Caco-2 (cell line): ENCODE measurements at regions of chr6 and their contacts with region 1.

Region 1: DNA sequence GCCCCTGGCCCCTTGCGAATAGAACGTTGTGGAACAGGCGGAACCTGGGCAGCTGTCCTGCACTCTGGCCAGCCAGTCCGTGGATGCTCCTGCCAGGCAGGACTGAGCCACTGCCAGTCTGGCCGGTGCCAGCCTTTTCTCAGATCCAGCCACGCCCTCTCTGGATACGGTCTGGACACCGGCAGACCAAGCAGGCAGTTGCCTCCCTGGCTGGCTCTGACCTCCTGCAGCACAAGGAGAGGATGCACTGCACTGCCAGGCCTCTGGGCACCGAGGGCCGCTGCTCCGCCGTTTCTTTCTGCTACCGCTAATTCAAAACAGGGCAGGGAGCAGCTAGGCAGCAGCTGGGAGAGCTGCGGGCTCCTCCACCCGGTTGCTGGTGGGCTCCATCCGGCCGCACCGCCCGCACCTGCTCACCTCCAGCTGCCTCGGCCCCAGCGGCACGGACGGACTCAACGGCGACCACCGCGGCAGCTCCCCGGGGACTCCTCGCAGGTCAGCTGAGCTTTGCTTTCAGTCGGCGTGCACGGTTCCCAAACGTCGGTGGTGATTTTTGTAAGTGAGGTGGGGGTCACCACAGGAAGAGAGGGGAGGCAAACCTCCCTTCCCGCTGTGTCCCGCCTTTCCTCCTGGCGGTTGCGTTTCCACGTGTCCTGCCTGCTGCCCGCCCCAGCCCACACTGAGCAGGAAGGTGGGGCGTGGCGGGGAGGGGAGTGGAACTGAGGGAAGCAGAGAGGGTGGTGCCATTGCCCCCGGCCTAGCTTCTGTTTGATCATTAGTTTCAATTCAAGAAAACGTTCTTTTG is 30.3 kb upstream of the AFDN start:
- DNase-seq: peak; percentile 51 to 53
- H3K4me3 ChIP-seq: peak overlapping the region; percentile 51
- H3K4me3 Mint-ChIP-seq: peak overlapping the region; percentile 62
- H3K27ac Mint-ChIP-seq: peak overlapping the region; percentile 27
- H3K4me1 ChIP-seq: peaks cover 17% of the 10 kb centered on the region
- H3K4me1 Mint-ChIP-seq: peaks cover 22% of the 10 kb centered on the region
- H3K27me3 ChIP-seq: no peaks in the 10 kb centered on the region
- H3K27me3 Mint-ChIP-seq: no peaks in the 10 kb centered on the region
- CTCF ChIP-seq: no peak

Region 2: DNA sequence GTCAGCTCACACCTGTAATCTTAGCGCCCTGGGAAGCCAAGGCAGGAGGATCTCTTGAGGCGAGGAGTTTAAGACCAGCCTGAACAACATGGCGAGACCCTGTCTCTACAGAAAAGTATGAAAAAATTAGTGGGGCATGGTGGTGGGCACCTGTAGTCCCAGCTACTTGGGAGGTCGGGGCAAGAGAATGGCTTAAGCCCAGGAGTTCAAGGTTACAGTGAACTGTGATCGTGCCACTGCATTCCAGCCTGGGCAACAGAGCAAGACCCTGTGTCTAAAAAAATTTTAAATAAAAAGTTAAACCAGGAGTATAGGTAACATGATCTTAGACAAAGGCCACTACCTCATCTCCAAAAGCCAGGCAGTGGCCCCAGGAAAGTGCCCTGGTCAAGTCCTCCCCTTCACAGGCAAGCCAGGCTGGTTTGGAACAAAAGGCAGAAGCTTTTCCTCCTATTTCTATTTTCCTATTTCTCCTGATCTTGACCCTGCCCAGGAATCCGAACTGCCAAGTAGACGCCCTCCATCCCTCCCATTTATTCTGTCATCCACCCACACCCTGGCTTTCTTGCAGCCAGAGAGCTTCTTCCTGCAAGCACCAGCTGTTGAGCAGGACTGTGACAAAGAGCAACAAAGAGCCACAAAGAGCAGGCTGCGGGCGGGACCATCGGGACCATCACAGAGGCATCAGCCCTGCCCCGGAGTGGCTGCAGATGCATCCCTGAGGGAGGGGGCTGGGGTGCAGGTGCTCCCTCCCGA is 119.5 kb before region 1 on chr6:
- CTCF ChIA-PET with region 1: interaction called, 3 read pairs
- POLR2A ChIA-PET with region 1: no interaction called
- intact Hi-C with region 1: loop called (anchors 2 kb)
- DNase-seq: no peak
- H3K4me3 ChIP-seq: no peak overlapping the region
- H3K4me3 Mint-ChIP-seq: peak overlapping the region; percentile 87
- H3K27ac Mint-ChIP-seq: peak overlapping the region; percentile 86
- H3K4me1 ChIP-seq: peaks cover 65% of the 10 kb centered on the region
- H3K4me1 Mint-ChIP-seq: peaks cover 40% of the 10 kb centered on the region
- H3K27me3 ChIP-seq: no peaks in the 10 kb centered on the region
- H3K27me3 Mint-ChIP-seq: no peaks in the 10 kb centered on the region
- CTCF ChIP-seq: no peak

Region 3: GRCh38 chr6:167711768-167712730 is 84.3 kb before region 1 on chr6:
- CTCF ChIA-PET with region 1: no interaction called
- POLR2A ChIA-PET with region 1: no interaction called
- intact Hi-C with region 1: no loop called
- DNase-seq: no peak
- H3K4me3 ChIP-seq: no peak overlapping the region
- H3K4me3 Mint-ChIP-seq: no peak overlapping the region
- H3K27ac Mint-ChIP-seq: no peak overlapping the region
- H3K4me1 ChIP-seq: no peaks in the 10 kb centered on the region
- H3K4me1 Mint-ChIP-seq: no peaks in the 10 kb centered on the region
- H3K27me3 ChIP-seq: no peaks in the 10 kb centered on the region
- H3K27me3 Mint-ChIP-seq: no peaks in the 10 kb centered on the region
- CTCF ChIP-seq: no peak

Region 4: GRCh38 chr6:167898673-167899311 is 102.4 kb after region 1 on chr6:
- CTCF ChIA-PET with region 1: no interaction called
- POLR2A ChIA-PET with region 1: no interaction called
- intact Hi-C with region 1: no loop called
- DNase-seq: no peak
- H3K4me3 ChIP-seq: no peak overlapping the region
- H3K4me3 Mint-ChIP-seq: no peak overlapping the region
- H3K27ac Mint-ChIP-seq: no peak overlapping the region
- H3K4me1 ChIP-seq: no peaks in the 10 kb centered on the region
- H3K4me1 Mint-ChIP-seq: peaks cover 11% of the 10 kb centered on the region
- H3K27me3 ChIP-seq: no peaks in the 10 kb centered on the region
- H3K27me3 Mint-ChIP-seq: no peaks in the 10 kb centered on the region
- CTCF ChIP-seq: peak; percentile 53 to 60

Region 5: GRCh38 chr6:167910016-167910415 is 113.6 kb after region 1 on chr6:
- CTCF ChIA-PET with region 1: no interaction called
- POLR2A ChIA-PET with region 1: no interaction called
- intact Hi-C with region 1: no loop called
- DNase-seq: no peak
- H3K4me3 ChIP-seq: no peak overlapping the region
- H3K4me3 Mint-ChIP-seq: no peak overlapping the region
- H3K27ac Mint-ChIP-seq: no peak overlapping the region
- H3K4me1 ChIP-seq: peaks cover 13% of the 10 kb centered on the region; the same call in 1 of the 2 replicates
- H3K4me1 Mint-ChIP-seq: peaks cover 6% of the 10 kb centered on the region
- H3K27me3 ChIP-seq: no peaks in the 10 kb centered on the region
- H3K27me3 Mint-ChIP-seq: no peaks in the 10 kb centered on the region
- CTCF ChIP-seq: no peak

Region 6: DNA sequence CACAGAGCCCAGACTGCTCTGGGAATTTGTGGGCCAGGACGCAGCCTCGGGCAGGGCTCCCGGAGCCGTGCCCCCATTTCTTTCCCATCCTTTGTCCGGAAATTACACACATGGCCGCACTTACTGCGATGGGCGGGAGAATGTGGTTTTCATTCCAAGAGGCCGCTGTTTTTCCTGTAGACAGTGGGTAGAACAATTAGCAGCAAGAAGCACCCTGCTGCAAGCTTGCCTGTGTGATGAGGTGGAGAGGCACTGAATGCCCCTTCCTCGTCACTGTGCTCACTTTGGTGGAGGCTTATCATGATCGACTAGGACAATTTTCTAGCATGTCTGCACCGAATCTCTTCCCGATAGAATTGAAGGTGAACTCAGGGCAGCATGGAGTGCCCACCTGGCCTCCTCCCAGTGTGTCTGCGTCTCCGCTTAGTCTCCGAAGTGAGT is 420.4 kb after region 1 on chr6:
- CTCF ChIA-PET with region 1: no interaction called
- POLR2A ChIA-PET with region 1: no interaction called
- intact Hi-C with region 1: no loop called
- DNase-seq: no peak
- H3K4me3 ChIP-seq: no peak overlapping the region
- H3K4me3 Mint-ChIP-seq: no peak overlapping the region
- H3K27ac Mint-ChIP-seq: no peak overlapping the region
- H3K4me1 ChIP-seq: no peaks in the 10 kb centered on the region
- H3K4me1 Mint-ChIP-seq: no peaks in the 10 kb centered on the region
- H3K27me3 ChIP-seq: no peaks in the 10 kb centered on the region; the same call in 1 of the 2 replicates
- H3K27me3 Mint-ChIP-seq: no peaks in the 10 kb centered on the region
- CTCF ChIP-seq: no peak